Left cardiac atrium (tissue), 4 donors: ENCODE measurements at regions of chr18 and their contacts with region 1.

Region 1: DNA sequence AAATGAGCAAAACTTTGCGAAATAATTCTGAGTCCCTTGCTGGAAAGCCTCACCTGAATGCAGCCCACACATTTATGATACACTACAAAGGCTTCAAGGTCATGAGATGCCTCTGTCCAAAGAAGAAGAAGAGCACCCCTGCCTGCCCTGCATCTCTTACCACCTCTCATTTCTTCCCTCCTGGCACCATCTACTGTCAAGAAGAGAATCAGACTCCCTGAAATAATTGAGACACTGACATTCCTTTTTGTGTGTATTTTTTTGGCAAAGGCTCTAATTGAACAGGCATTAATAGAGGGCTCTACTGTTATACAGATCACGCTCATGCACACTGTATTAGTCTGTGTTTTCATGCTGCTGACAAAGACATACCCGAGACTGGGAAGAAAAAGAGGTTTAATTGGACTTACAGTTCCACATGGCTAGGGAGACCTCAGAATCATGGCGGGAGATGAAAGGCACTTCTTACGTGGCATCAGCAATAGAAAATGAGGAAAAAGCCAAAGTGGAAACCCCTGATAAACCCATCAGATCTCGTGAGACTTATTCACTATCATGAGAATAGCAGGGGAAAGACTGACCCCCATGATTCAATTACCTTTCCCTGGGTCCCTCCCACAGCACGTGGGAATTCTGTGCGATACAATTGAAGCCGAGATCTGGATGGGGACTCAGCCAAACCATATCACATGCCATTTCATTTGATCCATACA is 176.3 kb downstream of the ALPK2 start:
- DNase-seq: no peak
- ATAC-seq: no peak

Region 2: DNA sequence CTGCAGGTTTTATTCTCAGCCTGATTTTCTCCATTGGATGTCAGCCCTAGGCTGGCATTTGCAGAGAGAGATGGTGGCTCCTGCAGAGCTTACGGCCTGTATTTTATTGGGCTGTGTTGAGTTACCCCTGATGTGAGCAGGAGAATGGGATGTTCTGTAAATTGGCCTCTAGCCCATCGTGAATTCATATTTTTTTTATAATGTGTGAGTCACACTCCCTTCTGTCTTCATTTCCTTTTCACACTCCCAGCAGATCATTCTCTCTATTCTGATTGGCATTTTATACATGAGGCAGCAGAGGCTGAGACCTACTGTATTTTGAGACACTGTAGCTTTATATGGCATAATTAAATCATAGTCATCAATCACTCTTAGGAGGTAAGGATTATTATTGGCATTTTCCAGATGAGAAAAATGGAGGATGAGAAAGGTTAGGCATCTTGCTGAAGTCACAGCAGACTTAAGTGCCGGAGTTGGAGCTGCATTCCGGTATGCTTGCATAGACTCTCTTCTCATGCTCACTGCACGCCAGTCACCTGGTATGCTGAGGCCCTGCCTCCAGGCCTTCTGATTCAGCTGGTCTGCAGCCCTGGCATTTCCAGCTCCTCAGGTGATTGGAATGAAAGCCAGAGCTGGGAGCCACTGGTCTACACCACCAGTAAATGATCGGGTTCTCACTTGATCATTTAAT is 266.2 kb before region 1 on chr18:
- intact Hi-C with region 1: no loop called
- DNase-seq: no peak
- ATAC-seq: peak in 1 of 2 donors; percentile 61

Region 3: DNA sequence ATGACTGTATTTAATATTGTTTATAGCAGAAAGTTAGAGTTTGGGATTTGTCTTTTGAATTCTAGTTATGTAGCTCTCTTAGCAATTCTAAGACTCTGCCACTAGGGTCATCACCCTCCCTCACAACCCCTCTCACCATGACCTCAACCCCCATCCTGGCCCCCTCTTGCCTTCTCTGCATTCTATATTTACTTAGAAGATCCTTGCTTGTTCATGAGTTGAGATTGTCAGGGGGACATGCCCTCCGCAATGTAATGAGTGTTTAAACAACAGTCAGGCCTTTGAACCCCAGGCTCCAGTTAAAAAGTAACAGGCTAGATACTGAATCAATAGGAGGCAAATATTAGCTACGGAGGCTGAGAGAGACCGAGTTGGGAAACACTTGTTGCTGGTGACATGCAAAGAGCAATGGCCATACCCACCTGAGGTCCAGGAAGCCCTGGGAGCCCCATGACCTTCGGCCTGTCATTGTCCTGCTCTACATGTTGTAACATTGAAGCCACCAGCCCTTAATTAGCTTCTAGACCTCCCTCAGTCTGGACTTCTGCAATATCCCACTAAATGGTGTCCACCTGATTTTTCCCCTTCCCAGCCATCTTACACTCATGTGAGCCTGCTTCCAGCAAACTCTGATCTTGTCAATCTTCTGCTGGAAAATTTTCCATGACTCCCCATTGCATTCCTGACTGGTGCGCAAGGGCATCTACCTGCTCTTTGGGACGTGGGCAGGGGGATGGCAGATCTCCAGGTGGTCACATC is 44.8 kb before region 1 on chr18:
- intact Hi-C with region 1: loop called in 1 of 2 experiments (anchors 5 kb)
- DNase-seq: no peak
- ATAC-seq: no peak